ENCODE measurements at regions of chr17 and their contacts with region 1.

Region 1: DNA sequence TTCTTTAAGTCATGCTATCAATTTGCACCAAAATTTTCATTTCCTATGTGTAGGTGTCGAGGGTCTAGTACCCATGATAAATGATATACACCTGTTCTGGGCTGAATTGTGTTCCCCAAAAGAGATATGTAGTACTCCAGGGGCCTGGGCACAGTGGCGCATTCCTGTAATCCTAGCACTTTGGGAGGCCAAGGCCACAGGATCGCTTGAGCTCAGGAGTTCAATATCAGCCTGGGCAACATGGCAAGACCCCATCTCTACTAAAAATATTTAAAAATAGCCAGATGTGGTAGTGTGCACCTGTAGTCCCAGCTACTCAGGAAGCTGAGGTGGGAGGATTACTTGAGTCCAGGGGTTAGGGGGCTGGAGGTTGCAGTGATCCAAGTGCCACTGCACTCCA is 23.5 kb upstream of the KANSL1 start:
- DNase-seq: no peak
- ATAC-seq: no peak
- H3K4me3 ChIP-seq: no peak overlapping the region
- H3K27ac ChIP-seq: no peak overlapping the region
- H3K4me1 ChIP-seq: peaks cover 7% of the 10 kb centered on the region
- H3K27me3 ChIP-seq: no peaks in the 10 kb centered on the region
- CTCF ChIP-seq: no peak
- POLR2A ChIP-seq: no peak

Region 2: DNA sequence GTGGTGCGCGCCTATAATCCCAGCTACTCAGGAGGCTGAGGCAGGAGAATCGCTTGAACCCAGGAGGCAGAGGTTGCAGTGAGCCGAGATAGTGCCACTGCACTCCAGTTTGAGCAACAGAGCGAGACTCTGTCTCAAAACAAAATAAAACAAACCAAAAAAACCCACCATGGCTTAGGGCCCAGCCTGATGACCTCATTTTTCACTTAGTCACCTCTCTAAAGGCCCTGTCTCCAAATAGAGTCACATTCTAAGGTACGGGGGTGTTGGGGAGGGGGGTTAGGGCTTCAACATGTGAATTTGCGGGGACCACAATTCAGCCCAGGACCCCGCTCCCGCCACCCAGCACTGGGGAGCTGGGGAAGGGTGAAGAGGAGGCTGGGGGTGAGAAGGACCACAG is 219.1 kb before region 1 on chr17:
- intact Hi-C with region 1: loop called (anchors 5 kb)
- DNase-seq: no peak
- ATAC-seq: no peak
- H3K4me3 ChIP-seq: no peak overlapping the region
- H3K27ac ChIP-seq: no peak overlapping the region
- H3K4me1 ChIP-seq: peaks cover 2% of the 10 kb centered on the region
- H3K27me3 ChIP-seq: no peaks in the 10 kb centered on the region
- CTCF ChIP-seq: no peak
- POLR2A ChIP-seq: no peak

Measured in body of pancreas (tissue), 4 donors.